Mammary epithelial cell (primary cell): ENCODE measurements at regions of chr1 and their contacts with region 1.

Region 1: GRCh38 chr1:207797229-207797961 is 45.5 kb downstream of the CD46 start:
- DNase-seq: peak; percentile 79
- H3K4me3 ChIP-seq: no peak overlapping the region
- H3K27ac ChIP-seq: no peak overlapping the region
- H3K4me1 ChIP-seq: no peaks in the 10 kb centered on the region
- H3K27me3 ChIP-seq: no peaks in the 10 kb centered on the region
- CTCF ChIP-seq: peak; percentile 80 to 85

Region 2: DNA sequence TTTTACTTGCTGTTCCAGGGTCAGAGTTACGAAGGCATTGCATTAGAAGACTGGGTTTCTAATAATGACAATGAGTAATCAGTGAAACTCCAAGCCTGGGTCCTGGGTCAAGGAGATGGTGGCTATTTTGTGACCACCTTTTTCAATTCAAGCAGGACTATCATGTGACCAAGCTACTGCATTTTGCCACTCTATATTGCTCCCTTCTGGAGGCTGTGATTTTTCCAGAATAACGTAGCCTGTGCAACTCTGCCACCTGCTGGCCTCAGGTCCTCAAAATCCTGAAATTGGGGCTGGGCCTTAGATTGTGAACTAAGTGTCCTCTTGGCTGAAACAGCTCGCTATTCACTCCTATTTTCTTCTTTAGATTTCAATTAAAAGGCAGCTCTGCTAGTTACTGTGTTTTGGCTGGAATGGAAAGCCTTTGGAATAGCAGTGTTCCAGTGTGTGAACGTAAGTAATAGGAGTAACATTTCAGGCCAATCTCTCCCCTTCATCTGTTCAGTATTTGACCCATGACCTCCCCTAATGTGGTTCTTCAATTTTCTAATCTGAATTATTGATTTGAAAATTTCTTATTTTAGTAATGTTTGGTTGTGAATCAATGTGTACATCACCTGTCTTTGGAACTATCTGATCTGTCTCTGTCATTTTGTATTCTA is 98.4 kb before region 1 on chr1:
- CTCF ChIA-PET with region 1: interaction called, 7 read pairs
- dilution Hi-C with region 1: no loop called
- in situ Hi-C with region 1: no loop called
- intact Hi-C with region 1: loop called (anchors 2 kb)
- DNase-seq: peak; percentile 55
- H3K4me3 ChIP-seq: no peak overlapping the region
- H3K27ac ChIP-seq: no peak overlapping the region
- H3K4me1 ChIP-seq: no peaks in the 10 kb centered on the region
- H3K27me3 ChIP-seq: no peaks in the 10 kb centered on the region
- CTCF ChIP-seq: peak; percentile 64 to 76

Region 3: GRCh38 chr1:207751790-207752455 is 45.5 kb before region 1 on chr1 and contains the start of gene CD46:
- CTCF ChIA-PET with region 1: no interaction called
- dilution Hi-C with region 1: loop called (anchors 5 kb)
- in situ Hi-C with region 1: no loop called
- intact Hi-C with region 1: loop called (anchors 1 kb)
- DNase-seq: peak; percentile 97
- H3K4me3 ChIP-seq: peak within 1 kb of the TSS; percentile 63 to 85 (median 70)
- H3K27ac ChIP-seq: peak within 1 kb of the TSS; percentile 85
- H3K4me1 ChIP-seq: peaks cover 49% of the 10 kb centered on the region
- H3K27me3 ChIP-seq: no peaks in the 10 kb centered on the region
- CTCF ChIP-seq: no peak
- total RNA-seq, gene CD46: 158 to 159 TPM

Region 4: GRCh38 chr1:207828485-207829158 is 31.2 kb after region 1 on chr1:
- CTCF ChIA-PET with region 1: interaction called, 29 read pairs
- dilution Hi-C with region 1: no loop called
- in situ Hi-C with region 1: no loop called
- intact Hi-C with region 1: no loop called
- DNase-seq: peak; percentile 71
- H3K4me3 ChIP-seq: no peak overlapping the region
- H3K27ac ChIP-seq: no peak overlapping the region
- H3K4me1 ChIP-seq: peaks cover 15% of the 10 kb centered on the region
- H3K27me3 ChIP-seq: no peaks in the 10 kb centered on the region
- CTCF ChIP-seq: peak; percentile 87 to 95